Activated T-helper 1 cell treated with anti-CD3 and anti-CD28 coated beads, Interleukin-12 subunit alpha, Interleukin-12 subunit beta, Interleukin-2, Interleukin-4 antibody, amounts not matched to agents 30 ng/mL and 10 ng/mL and 1 ng/mL, durations not matched to agents 14 hours and 24 hours and 36 hours (primary cell): ENCODE measurements at regions of chr16 and their contacts with region 1.

Region 1: GRCh38 chr16:75566040-75566810 is at the start of gene GABARAPL2:
- DNase-seq: peak; percentile 87
- H3K4me3 Mint-ChIP-seq: peak within 1 kb of the TSS; percentile 99
- H3K27ac Mint-ChIP-seq: peak within 1 kb of the TSS; percentile 90
- H3K4me1 Mint-ChIP-seq: peaks cover 28% of the 10 kb centered on the region
- H3K27me3 Mint-ChIP-seq: peaks cover 5% of the 10 kb centered on the region
- total RNA-seq, gene GABARAPL2: 62.7 and 69.5 TPM in 2 replicates

Region 2: DNA sequence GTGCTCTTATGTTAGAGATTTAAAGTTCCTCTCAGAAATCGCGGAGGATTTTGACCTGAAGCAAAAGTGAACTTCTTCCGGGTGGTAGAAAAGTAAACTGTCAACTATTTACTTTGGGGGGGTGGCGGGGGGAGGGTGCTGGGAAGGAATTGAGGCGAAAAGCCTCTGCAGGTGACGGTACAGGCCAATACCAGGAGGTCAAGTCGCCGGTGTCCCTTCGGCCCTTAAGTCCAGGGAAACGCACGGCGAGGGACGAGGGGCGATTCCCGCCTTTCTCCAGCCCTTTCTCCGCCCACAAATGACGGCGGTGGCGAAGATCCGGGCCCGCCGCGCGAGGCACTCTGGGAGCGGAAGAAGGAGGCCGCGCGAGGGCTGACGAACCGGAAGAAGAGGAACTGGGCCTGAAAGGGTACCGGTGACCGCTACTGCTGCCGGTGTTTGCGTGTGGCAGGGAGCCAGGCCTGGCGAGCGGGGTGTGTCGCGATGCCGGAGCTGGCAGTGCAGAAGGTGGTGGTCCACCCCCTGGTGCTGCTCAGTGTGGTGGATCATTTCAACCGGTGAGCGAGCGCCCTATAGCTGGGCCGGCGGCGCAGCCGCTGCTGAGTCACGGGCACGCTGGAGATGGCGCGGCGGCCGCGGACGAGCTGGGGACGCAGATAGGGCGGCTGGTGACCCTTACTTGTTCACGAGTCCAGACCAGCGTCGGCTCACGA is 1269.6 kb before region 1 on chr16 and contains the start of gene PSMD7:
- intact Hi-C with region 1: loop called (anchors 10 kb)
- DNase-seq: peak; percentile 88
- H3K4me3 Mint-ChIP-seq: peak within 1 kb of the TSS; percentile 90
- H3K27ac Mint-ChIP-seq: peak within 1 kb of the TSS; percentile 93
- H3K4me1 Mint-ChIP-seq: peaks cover 27% of the 10 kb centered on the region
- H3K27me3 Mint-ChIP-seq: no peaks in the 10 kb centered on the region
- total RNA-seq, gene PSMD7: 168 and 175 TPM in 2 replicates

Region 3: GRCh38 chr16:75251280-75252048 is 314.8 kb before region 1 on chr16 and contains the start of gene BCAR1:
- intact Hi-C with region 1: no loop called
- DNase-seq: no peak
- H3K4me3 Mint-ChIP-seq: no peak within 1 kb of the TSS
- H3K27ac Mint-ChIP-seq: no peak within 1 kb of the TSS
- H3K4me1 Mint-ChIP-seq: no peaks in the 10 kb centered on the region
- H3K27me3 Mint-ChIP-seq: peaks cover 32% of the 10 kb centered on the region
- total RNA-seq, gene BCAR1: 0.13 and 0.61 TPM in 2 replicates

Region 4: DNA sequence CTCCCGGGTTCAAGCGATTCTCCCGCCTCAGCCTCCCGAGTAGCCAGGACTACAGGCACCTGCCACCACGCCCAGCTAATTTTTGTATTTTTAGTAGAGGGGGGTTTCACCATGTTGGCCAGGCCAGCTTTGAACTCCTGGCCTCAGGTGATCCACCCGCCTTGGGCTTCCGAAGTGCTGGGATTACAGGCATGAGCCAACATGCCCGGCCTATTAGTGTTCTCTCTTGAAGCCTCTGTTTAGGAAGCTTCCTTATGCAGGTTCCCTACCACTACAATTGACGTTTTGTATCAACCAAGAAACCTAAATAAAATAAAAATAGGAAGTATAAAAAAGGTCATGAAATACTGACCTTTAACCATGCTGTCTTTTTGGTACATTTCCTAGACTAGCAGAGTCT is 46.3 kb before region 1 on chr16:
- intact Hi-C with region 1: loop called (anchors 1 kb)
- DNase-seq: no peak
- H3K4me3 Mint-ChIP-seq: no peak overlapping the region
- H3K27ac Mint-ChIP-seq: no peak overlapping the region
- H3K4me1 Mint-ChIP-seq: peaks cover 5% of the 10 kb centered on the region
- H3K27me3 Mint-ChIP-seq: peaks cover 5% of the 10 kb centered on the region

Region 5: GRCh38 chr16:75555707-75556430 is 10.4 kb before region 1 on chr16 and contains the start of gene TMEM231:
- intact Hi-C with region 1: loop called (anchors 1 kb)
- DNase-seq: peak; percentile 95
- H3K4me3 Mint-ChIP-seq: peak within 1 kb of the TSS; percentile 92
- H3K27ac Mint-ChIP-seq: peak within 1 kb of the TSS; percentile 89
- H3K4me1 Mint-ChIP-seq: peaks cover 11% of the 10 kb centered on the region
- H3K27me3 Mint-ChIP-seq: peaks cover 7% of the 10 kb centered on the region
- total RNA-seq, gene TMEM231: 4.5 and 4.7 TPM in 2 replicates

Region 6: DNA sequence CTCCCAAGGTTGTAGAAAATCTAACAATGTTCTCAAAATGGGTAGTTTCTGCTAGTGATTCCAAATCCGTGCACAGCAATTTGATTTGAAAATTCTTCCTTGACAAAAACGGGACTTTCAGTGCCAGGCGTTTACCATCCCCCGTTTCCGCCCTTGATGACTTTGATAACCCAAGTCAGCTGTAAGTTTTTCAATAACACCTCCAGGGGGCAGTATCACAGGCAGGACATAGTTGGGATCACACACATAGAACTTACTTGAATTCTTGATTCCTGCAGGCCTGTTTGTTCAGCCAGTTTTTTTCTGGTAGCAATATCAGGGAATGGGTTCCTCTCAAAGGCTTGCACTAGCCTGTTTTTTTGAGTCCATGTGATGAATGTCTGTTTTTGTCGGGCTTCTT is 129.5 kb after region 1 on chr16:
- intact Hi-C with region 1: no loop called
- DNase-seq: no peak
- H3K4me3 Mint-ChIP-seq: no peak overlapping the region
- H3K27ac Mint-ChIP-seq: no peak overlapping the region
- H3K4me1 Mint-ChIP-seq: no peaks in the 10 kb centered on the region
- H3K27me3 Mint-ChIP-seq: peaks cover 3% of the 10 kb centered on the region

Region 7: DNA sequence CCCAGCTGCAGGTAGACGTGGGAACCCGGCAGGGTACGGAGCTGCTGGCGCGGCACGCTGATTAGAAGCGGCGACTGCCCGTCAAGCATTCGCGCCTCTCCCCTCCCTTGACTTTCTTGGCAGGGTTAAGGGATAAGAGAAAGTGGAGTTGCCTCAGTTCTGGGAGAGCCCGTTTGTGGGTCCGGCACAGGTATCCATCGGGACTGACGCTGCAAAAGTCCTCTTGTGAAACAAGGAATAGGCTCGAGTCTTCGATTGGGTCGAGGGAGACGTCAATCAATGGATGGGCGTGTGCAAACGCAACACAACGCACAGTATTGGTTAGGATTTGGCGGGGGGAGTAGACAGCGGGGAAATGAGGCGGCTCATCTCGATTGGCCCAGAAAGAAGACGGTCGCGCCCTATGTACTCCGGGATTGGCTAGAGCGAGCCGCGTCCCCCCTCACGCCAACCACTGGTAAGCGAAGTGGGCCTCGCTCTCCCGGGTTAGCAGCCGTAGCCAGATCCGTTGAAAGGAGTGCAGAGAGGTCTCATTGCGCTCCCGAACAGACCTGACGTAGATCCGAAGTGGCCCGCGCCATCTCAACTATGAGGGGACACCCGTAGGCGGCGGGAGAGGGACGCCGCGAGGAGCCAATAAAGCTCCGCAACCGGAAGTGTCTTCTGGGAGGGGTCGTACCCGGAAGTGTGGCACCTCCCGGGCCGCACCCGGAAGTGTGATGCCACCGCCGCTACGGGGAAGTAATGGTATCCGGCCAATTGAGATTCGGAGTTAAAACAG is 1624.4 kb after region 1 on chr16 and contains the start of gene MON1B:
- intact Hi-C with region 1: loop called (anchors 2 kb)
- DNase-seq: peak; percentile 93
- H3K4me3 Mint-ChIP-seq: peak within 1 kb of the TSS; percentile 97
- H3K27ac Mint-ChIP-seq: peak within 1 kb of the TSS; percentile 100
- H3K4me1 Mint-ChIP-seq: peaks cover 39% of the 10 kb centered on the region
- H3K27me3 Mint-ChIP-seq: peaks cover 4% of the 10 kb centered on the region
- total RNA-seq, gene MON1B: 66.2 and 70.1 TPM in 2 replicates